ENCODE measurements at regions of chr9 and their contacts with region 1.

Region 1: DNA sequence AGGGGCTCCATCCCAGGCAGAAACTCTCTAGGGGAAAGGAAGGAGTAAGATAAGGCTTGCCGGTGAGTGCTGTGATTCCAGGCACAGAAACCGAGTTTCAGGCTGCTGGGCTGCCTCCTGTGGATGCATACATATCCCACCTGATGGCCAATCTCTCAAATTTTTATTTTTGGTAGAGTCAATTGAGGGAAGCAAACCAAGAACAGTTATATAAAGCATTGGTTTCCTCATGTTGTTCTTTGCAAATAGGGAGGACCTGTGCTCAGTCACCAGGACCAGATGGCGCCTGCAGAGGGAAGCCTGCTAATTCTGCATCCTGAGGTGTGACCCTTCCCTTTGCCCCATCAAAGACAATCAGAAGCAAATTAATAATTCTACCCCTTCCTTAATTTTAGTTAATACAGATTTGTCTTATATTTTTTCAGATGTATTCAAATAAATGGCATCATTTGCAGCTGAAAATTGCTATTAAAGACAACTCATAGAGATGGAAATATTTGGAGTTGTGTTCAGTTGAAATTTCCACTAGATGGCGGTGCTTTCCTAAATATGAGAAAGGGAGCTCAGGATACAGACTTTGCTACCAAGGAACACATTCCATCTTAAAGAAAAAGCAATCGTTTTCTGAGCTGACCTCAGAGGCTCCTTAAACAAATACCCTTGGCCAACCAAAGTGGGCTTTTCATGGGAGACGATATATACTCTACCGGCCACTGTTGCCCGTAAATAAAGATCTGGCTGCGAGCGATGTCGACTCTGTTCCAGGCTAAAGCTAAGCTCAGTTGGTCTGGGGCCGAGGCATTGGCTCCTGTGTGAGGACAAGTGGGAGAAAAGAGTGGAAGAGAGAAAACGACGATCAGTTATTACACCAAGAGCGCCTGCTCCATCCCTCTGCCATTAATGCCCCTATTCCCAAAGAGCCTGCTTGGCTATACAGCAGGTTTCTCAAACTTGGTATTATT is 225.7 kb upstream of the KLF9 start:
- DNase-seq: no peak
- ATAC-seq: no peak

Region 2: DNA sequence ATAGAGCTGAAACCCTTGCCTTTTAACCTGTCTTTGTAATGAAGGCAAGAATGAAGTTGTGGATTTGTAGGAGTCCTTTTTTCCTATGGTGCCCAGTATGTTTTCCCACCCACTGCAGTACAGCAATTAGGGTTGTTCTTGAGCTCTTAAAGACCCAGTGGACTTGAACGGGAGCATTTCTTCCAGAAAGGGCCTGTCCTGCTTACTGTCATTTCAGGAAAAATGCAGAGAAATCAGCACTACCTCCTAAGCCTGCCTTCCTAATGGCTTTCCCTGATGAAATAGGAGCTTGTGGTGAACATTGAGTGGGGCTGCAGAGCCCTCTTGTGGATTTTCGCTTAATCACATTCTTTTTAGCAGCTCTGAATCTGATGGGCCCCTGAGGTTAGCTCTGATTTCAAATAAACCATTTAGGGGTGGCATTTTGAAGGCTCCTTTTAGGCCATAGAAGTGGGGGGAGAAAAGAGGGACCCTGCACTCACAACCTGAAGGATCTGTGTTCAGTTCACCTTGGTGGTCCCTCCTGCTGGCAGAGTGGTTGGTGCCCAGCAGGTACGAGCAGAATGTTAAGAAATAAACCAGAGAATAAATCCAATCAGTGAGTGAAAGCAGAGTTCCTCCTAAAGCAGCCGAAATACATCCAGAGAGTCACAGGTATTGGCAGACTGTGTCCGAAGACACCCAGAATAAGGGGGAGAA is 37.7 kb before region 1 on chr9:
- intact Hi-C with region 1: no loop called
- DNase-seq: no peak
- ATAC-seq: peak; percentile 59

Region 3: GRCh38 chr9:71001780-71002386 is 361.7 kb after region 1 on chr9:
- intact Hi-C with region 1: loop called (anchors 2 kb)
- DNase-seq: no peak
- ATAC-seq: no peak

Region 4: GRCh38 chr9:71249729-71250317 is 609.7 kb after region 1 on chr9:
- intact Hi-C with region 1: loop called (anchors 2 kb)
- DNase-seq: no peak
- ATAC-seq: no peak